Right ventricle myocardium superior (tissue), 1 donor: ENCODE measurements at regions of chr14 and their contacts with region 1.

Region 1: DNA sequence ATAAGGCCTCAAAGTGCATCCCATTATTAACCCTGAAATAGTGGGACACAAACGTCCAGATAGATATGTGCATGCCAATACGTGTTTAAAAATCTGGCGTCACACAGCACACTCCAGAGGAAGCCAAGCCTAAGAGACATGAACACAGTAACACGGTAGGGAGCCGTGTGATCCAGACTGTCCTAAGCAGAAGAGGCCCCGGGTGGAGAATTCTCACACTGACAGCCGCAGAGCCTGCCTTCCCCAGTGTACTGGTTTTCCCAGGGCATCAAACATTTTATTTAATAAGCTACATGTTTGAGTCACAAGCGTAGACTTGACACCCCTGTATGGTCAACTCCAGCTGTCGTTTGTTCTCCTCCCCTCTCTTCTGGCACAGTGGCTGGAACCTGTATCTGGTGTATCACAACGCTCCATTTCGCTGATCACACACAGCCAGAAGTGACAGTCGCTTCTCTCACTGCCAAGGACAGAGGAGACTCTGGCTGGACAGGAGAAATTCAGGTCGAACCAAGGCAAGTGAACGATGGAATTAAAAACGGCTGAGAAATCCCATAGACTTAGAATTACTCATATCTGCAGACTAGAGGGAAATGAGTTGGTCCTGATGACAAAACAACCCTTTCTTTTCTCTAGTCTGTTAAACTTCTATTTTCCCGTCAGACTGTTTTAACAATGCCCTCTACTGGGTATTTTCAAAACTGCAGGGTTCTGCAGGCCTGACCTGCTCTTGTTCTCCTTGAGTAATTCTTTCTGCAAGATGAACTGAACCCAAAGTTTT is 359.9 kb downstream of the RGS6 start:
- DNase-seq: no peak
- ATAC-seq: peak; percentile 87

Region 2: GRCh38 chr14:71932220-71932981 is 359.7 kb before region 1 on chr14 and contains the start of gene RGS6:
- intact Hi-C with region 1: loop called (anchors 1 kb)
- DNase-seq: peak; percentile 47
- ATAC-seq: peak; percentile 92
- total RNA-seq, gene RGS6: 26.1 TPM

Region 3: DNA sequence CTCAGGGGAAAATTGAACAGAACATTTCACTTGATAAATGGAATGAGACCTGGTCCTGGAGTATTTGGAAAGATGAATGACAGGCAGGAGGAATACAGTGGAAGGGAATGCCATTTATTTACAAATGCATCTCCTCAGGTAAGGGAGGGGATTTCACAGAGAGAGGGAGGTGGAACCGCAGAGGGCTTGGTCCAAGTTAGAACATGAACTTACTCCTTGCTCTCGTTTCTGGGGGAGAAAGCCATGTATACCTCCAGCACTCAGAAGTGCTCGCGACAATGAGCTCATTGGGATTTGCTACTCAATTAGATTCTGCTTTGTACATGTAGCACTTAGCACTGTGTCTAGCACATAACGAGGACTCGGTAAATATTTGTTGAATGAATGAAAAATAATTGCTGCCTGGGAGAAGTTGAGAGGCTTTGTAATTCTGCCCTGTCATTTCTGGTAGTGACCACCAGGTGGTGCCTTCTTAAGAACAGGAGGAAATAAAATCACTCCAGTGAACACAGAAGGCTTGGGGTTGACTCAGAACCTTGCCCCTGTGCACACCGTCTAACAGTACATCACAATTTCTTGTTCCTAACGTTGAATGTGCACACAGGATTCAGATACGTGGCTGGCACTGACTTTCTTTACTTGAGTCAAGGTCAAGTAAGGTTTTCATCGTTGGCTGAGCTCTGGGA is 268.2 kb before region 1 on chr14:
- intact Hi-C with region 1: loop called (anchors 5 kb)
- DNase-seq: no peak
- ATAC-seq: peak; percentile 63

Region 4: GRCh38 chr14:72256056-72256455 is 36.0 kb before region 1 on chr14:
- intact Hi-C with region 1: no loop called
- DNase-seq: no peak
- ATAC-seq: no peak